Sciatic nerve (tissue), 2 donors: ENCODE measurements at regions of chr6 and their contacts with region 1.

Region 1: DNA sequence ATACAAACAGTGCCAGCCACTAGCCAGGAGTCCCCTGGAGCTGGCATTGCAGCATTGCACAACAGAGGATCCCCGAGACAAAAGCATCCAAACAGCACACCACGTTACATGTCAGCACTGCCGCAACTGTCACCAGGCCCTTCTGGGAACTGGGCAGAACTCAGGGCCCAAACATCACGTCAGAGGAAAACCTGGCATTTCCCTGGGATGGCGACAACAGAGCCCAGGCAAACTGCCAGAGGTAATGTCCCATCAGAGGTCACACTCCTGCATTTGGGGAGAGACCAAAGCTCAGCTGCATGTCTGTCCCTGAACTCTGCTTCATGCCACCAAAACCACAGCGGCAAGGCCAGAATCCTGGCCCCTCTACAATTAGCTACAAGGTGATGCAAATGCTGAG is 36.3 kb downstream of the PPP1R3G start:
- DNase-seq: no peak
- ATAC-seq: no peak

Region 2: DNA sequence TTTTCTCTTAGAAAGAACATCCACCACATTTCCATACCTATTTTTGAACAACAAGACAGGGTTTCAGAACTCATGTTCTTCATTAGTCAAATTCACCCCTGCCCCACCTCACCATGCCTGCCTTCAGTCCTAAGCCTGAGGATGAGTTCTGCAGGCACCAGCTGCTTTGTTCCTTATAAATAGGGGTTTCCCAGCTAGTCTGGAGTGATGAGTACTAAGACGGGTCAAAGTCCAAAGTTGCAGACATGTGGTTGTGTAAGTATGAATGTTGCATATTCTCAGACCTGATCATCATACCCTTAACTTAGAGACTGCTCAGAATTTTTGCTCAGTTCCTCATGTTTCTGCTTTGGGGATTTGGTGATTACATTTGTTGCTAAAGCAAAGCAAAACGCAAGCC is 603.0 kb before region 1 on chr6:
- intact Hi-C with region 1: no loop called
- DNase-seq: no peak
- ATAC-seq: no peak

Region 3: DNA sequence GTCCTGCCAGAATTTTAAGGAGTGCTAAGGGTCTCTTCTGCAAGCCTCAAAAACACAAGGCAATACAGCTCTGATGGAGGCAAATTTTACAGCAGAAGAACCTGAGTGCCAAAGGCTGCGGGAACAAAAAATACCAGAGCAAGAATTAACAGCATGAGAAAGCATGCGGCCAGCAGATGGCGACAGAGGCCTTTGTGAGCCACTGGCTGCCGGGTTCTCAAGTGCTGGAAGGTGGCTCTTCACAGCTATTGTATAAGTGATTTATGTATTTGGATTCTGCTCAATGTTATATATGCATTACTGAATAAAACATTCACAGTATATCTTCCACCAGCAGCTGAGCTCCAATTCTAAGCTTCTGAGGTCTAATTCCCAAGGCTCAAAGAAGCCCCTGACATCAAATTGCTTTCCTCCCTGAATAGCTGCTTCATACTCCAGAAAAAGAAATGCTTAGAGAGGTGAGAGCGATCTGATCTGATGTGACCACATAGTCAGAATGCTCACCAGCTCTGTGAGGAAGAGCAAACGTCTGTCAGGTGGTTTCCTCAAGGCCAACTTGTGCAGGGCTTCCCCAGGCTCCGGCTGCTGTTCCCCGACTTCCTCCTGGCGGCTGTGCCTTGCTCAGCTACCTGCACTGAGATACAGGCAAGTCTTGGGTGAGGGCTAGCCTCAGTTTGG is 22.3 kb after region 1 on chr6:
- intact Hi-C with region 1: no loop called
- DNase-seq: peak; percentile 94
- ATAC-seq: peak; percentile 83

Region 4: GRCh38 chr6:6631534-6632276 is 1510.2 kb after region 1 on chr6:
- intact Hi-C with region 1: loop called (anchors 5 kb)
- DNase-seq: no peak
- ATAC-seq: no peak